ENCODE measurements at regions of chr16 and their contacts with region 1.

Region 1: DNA sequence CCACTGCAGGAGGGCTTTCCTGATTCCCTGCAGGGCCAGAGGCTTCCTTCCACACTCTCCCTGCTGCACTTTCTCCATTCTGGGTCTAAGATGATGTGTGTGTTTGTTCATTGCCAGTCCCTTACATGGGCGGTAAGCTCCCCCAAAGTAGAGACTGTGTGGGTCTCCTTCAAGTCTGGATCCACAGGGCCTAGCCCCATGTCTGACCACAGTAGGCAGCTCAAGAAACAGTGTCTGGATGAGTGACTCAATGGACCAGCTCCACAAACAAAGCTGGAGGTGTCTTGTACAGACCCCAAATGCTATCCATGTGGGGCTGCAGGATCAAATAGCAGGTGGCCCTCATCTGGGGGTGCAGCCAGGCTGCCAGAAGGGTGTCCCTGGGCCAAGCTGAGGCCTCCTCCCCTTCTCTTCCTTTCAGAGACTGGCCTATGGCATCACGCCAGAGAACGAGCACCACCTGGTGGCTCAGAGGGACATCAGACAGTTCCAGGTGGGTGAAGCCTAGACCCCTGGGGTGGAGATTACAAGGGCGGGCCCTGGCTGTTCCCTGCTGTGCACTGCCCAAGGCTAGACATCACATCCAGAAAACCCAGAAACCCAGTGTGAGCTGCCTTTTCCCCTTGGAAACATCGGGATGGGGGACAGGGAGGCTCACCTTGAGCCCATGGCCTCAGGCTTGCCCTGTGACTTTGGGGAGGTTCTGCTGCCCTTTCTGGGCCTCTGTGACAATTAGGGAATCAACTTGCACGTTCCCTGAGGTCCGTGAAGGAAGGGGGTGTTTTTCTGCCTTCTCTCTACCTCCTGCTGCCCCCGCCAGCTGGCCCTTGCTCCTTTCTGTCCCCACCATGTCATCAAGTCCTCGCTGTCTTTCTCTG is 45.9 kb downstream of the SLC6A2 start:
- DNase-seq: peak; percentile 45
- H3K4me3 ChIP-seq: no peak overlapping the region
- H3K27ac ChIP-seq: no peak overlapping the region
- H3K4me1 ChIP-seq: no peaks in the 10 kb centered on the region
- H3K27me3 ChIP-seq: peaks cover 46% of the 10 kb centered on the region
- CTCF ChIP-seq: peak; percentile 76

Region 2: GRCh38 chr16:55465077-55465896 is 236.4 kb before region 1 on chr16:
- intact Hi-C with region 1: loop called (anchors 5 kb)
- DNase-seq: peak; percentile 85
- H3K4me3 ChIP-seq: peak overlapping the region; percentile 14
- H3K27ac ChIP-seq: no peak overlapping the region
- H3K4me1 ChIP-seq: no peaks in the 10 kb centered on the region
- H3K27me3 ChIP-seq: peaks cover 10% of the 10 kb centered on the region
- CTCF ChIP-seq: peak; percentile 100

Region 3: GRCh38 chr16:55494994-55495421 is 206.7 kb before region 1 on chr16:
- intact Hi-C with region 1: loop called (anchors 10 kb)
- DNase-seq: no peak
- H3K4me3 ChIP-seq: no peak overlapping the region
- H3K27ac ChIP-seq: peak overlapping the region; percentile 34
- H3K4me1 ChIP-seq: peaks cover 44% of the 10 kb centered on the region
- H3K27me3 ChIP-seq: no peaks in the 10 kb centered on the region
- CTCF ChIP-seq: peak; percentile 63

Measured in left ventricle myocardium inferior (tissue), 1 donor.